Mammary epithelial cell (primary cell): ENCODE measurements at regions of chr11 and their contacts with region 1.

Region 1: DNA sequence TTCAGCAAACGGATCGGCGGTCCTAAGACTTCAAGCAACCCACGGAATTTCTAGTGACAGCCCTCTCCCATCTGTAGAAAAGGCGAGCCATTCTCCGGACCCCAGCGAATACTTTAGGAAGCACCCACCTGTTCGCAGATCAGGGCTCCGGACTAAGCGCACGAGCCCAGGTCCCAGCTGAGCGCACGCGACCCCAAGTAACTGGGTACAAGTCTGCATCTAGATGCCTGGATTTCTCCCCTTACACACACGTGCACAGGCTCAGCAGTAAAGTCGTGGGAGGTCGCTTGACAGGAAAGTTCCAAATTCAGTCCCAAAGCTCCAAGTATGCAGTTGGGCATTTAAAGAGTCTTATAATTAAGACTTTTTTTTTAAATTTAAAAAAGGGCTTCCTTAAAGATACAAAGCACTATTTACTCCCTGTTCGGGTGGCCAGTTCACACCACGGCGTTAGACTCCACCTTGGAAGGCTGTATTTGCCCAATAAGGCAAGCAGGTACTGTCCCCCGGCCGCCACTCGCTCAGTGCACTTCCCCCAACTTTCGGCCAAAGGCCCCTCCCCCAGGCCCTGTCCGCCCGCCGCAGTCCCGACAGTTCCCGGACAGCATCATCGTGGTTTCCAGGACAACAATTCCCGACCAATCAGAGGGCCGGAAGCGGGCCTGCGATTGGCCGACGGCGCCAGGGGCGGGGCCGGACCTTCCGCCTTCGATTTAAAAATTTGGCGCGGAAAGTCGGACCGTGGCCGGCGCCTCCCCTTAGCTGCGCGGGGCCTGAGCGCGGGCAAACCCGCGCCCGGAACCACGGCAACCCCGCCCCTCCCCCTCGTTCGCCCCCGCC is at the start of gene E2F8:
- DNase-seq: peak; percentile 95
- H3K4me3 ChIP-seq: peak within 1 kb of the TSS; percentile 63 to 77 (median 77)
- H3K27ac ChIP-seq: peak within 1 kb of the TSS; percentile 90
- H3K4me1 ChIP-seq: peaks cover 41% of the 10 kb centered on the region
- H3K27me3 ChIP-seq: no peaks in the 10 kb centered on the region
- CTCF ChIP-seq: no peak
- total RNA-seq, gene E2F8: 0.17 to 3.4 TPM

Region 2: GRCh38 chr11:19121646-19122045 is 119.0 kb before region 1 on chr11:
- CTCF ChIA-PET with region 1: no interaction called
- dilution Hi-C with region 1: no loop called
- in situ Hi-C with region 1: no loop called
- intact Hi-C with region 1: no loop called
- DNase-seq: no peak
- H3K4me3 ChIP-seq: no peak overlapping the region
- H3K27ac ChIP-seq: no peak overlapping the region
- H3K4me1 ChIP-seq: peaks cover 4% of the 10 kb centered on the region
- H3K27me3 ChIP-seq: no peaks in the 10 kb centered on the region
- CTCF ChIP-seq: no peak

Region 3: DNA sequence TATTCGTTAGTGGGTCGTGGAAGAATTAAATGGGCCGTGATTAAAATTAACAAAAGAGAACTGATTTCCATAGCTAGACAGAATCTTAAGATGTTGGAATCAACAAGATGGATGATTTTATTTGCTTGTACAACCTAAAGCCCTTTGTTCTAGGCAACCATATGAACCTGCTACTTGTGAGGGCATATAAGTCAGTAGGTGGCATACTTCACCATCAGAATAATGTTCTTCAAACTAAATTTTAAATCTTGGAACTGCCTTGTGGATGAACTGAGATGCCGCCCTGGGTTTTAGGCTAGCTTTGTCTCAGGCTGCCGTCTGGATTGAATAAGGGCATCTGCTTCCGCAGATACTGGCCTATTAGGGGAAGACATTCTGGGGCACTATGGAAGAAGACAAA is 79.8 kb before region 1 on chr11:
- CTCF ChIA-PET with region 1: no interaction called
- dilution Hi-C with region 1: no loop called
- in situ Hi-C with region 1: no loop called
- intact Hi-C with region 1: loop called (anchors 5 kb)
- DNase-seq: no peak
- H3K4me3 ChIP-seq: no peak overlapping the region
- H3K27ac ChIP-seq: no peak overlapping the region
- H3K4me1 ChIP-seq: no peaks in the 10 kb centered on the region
- H3K27me3 ChIP-seq: no peaks in the 10 kb centered on the region
- CTCF ChIP-seq: peak in 1 of 2 donors; percentile 19

Region 4: GRCh38 chr11:19723572-19724342 is 483.1 kb after region 1 on chr11:
- CTCF ChIA-PET with region 1: no interaction called
- dilution Hi-C with region 1: loop called (anchors 10 kb)
- in situ Hi-C with region 1: no loop called
- intact Hi-C with region 1: no loop called
- DNase-seq: peak; percentile 65
- H3K4me3 ChIP-seq: no peak overlapping the region
- H3K27ac ChIP-seq: no peak overlapping the region
- H3K4me1 ChIP-seq: peaks cover 29% of the 10 kb centered on the region
- H3K27me3 ChIP-seq: no peaks in the 10 kb centered on the region
- CTCF ChIP-seq: no peak